ENCODE measurements at regions of chr7 and their contacts with region 1.

Region 1: DNA sequence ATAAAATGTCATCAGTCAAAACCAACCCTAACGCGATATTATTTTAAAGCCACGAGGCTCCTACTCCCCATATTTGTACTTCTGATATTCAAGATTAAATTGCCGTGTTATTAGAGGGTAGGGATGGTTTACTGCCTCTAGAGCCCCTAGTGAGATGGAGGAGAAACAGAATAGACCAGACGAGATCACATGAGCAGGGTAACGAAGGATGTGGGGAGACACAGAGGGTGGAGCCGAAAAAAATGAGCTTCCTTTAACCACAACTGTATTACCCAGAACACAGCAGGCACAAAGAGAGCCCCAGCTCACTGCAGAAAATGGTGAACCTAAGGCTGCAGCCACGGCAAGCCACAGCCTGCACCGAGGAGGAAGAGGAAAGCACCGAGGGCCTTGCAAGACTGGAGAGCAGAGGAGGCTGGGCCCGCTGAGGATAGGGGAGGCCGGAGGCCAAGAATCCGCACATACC is 14.3 kb downstream of the ZC3HAV1 start:
- DNase-seq: peak; percentile 91 to 96 (median 94)
- H3K4me3 ChIP-seq: peak overlapping the region; percentile 34 to 39
- H3K4me3 Mint-ChIP-seq: peak overlapping the region; percentile 78 to 93 (median 88)
- H3K27ac ChIP-seq: peak overlapping the region; percentile 61
- H3K27ac Mint-ChIP-seq: peak overlapping the region; percentile 88 to 97 (median 93)
- H3K4me1 ChIP-seq: peaks cover 90% of the 10 kb centered on the region
- H3K4me1 Mint-ChIP-seq: peaks cover 62 to 94% (median 78%) of the 10 kb centered on the region in 4 donors
- H3K27me3 ChIP-seq: no peaks in the 10 kb centered on the region
- H3K27me3 Mint-ChIP-seq: no peaks in the 10 kb centered on the region

Region 2: GRCh38 chr7:139068544-139069399 is 26.5 kb before region 1 on chr7:
- CTCF ChIA-PET with region 1: interaction called, 6 read pairs
- POLR2A ChIA-PET with region 1: interaction called, 10 read pairs
- intact Hi-C with region 1: no loop called
- DNase-seq: no peak
- H3K4me3 ChIP-seq: no peak overlapping the region
- H3K4me3 Mint-ChIP-seq: peak overlapping the region in 1 of 8 donors; percentile 40
- H3K27ac ChIP-seq: no peak overlapping the region
- H3K27ac Mint-ChIP-seq: peak overlapping the region; percentile 47 to 93 (median 68)
- H3K4me1 ChIP-seq: peaks cover 43% of the 10 kb centered on the region
- H3K4me1 Mint-ChIP-seq: peaks cover 33 to 83% (median 56%) of the 10 kb centered on the region in 4 donors
- H3K27me3 ChIP-seq: no peaks in the 10 kb centered on the region
- H3K27me3 Mint-ChIP-seq: no peaks in the 10 kb centered on the region

Region 3: GRCh38 chr7:139080905-139081304 is 14.3 kb before region 1 on chr7:
- CTCF ChIA-PET with region 1: interaction called, 35 read pairs
- POLR2A ChIA-PET with region 1: interaction called, 244 read pairs
- intact Hi-C with region 1: loop called (anchors 1 kb)
- DNase-seq: no peak
- H3K4me3 ChIP-seq: no peak overlapping the region
- H3K4me3 Mint-ChIP-seq: peak overlapping the region; percentile 5 to 88 (median 68)
- H3K27ac ChIP-seq: peak overlapping the region; percentile 30
- H3K27ac Mint-ChIP-seq: peak overlapping the region; percentile 79 to 94 (median 88)
- H3K4me1 ChIP-seq: peaks cover 83% of the 10 kb centered on the region
- H3K4me1 Mint-ChIP-seq: peaks cover 62 to 97% (median 84%) of the 10 kb centered on the region in 4 donors
- H3K27me3 ChIP-seq: no peaks in the 10 kb centered on the region
- H3K27me3 Mint-ChIP-seq: no peaks in the 10 kb centered on the region

Region 4: GRCh38 chr7:139118234-139118804 is 23.1 kb after region 1 on chr7:
- CTCF ChIA-PET with region 1: interaction called, 17 read pairs
- POLR2A ChIA-PET with region 1: interaction called, 46 read pairs
- intact Hi-C with region 1: no loop called
- DNase-seq: no peak
- H3K4me3 ChIP-seq: peak overlapping the region in 1 of 2 donors; percentile 8
- H3K4me3 Mint-ChIP-seq: peak overlapping the region; percentile 48 to 86 (median 78)
- H3K27ac ChIP-seq: peak overlapping the region; percentile 4
- H3K27ac Mint-ChIP-seq: peak overlapping the region; percentile 59 to 93 (median 89)
- H3K4me1 ChIP-seq: peaks cover 28% of the 10 kb centered on the region
- H3K4me1 Mint-ChIP-seq: peaks cover 25 to 52% (median 32%) of the 10 kb centered on the region in 4 donors
- H3K27me3 ChIP-seq: no peaks in the 10 kb centered on the region
- H3K27me3 Mint-ChIP-seq: peaks cover 0 to 3% of the 10 kb centered on the region in 2 donors

Region 5: DNA sequence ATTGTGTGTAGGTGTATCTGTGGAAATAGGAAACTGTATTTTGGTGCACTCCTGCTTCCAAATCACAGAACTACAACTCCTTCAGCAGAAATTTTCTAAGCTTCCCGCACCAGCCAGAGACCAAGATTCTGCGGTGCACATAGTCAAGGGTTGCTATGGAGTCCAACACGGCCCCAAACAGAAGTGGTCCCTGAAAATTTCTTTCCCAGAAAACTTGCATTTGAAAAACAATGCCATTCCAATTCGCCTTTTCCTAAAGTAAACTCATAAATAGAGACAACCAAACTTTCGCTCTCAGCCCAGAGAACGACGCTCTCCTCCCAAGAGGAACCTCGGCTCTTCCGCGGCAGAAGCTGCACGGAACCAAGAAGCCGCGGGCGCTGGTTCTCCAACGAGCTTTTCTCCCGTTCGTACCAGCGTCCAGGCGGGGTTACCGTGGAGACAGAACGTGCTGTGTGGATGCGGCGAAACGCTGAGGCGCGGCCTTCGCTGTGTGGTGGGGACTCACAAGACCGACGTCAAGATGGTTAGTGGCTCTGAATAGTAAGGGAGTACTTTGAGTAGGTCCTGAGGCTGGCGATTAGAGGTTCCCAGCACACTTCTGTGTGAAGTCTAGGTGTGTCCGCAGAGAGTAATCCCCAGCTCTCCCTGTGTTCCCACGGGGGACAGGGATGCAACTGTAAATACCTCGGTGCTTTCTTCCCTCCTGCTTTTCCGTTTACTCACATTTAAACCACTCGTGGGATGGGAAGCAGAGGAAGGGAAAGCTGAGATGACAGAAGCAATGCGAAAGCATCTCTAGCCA is 38.3 kb after region 1 on chr7:
- CTCF ChIA-PET with region 1: interaction called, 11 read pairs
- POLR2A ChIA-PET with region 1: interaction called, 36 read pairs
- intact Hi-C with region 1: loop called (anchors 1 kb)
- DNase-seq: peak; percentile 86 to 89 (median 88)
- H3K4me3 ChIP-seq: peak overlapping the region; percentile 25 to 55
- H3K4me3 Mint-ChIP-seq: peak overlapping the region; percentile 87 to 97 (median 92)
- H3K27ac ChIP-seq: peak overlapping the region; percentile 56
- H3K27ac Mint-ChIP-seq: peak overlapping the region; percentile 73 to 97 (median 93)
- H3K4me1 ChIP-seq: peaks cover 14% of the 10 kb centered on the region
- H3K4me1 Mint-ChIP-seq: peaks cover 5 to 22% (median 17%) of the 10 kb centered on the region in 4 donors
- H3K27me3 ChIP-seq: no peaks in the 10 kb centered on the region
- H3K27me3 Mint-ChIP-seq: no peaks in the 10 kb centered on the region

Region 6: GRCh38 chr7:139180700-139181311 is 85.6 kb after region 1 on chr7:
- CTCF ChIA-PET with region 1: no interaction called
- POLR2A ChIA-PET with region 1: no interaction called
- intact Hi-C with region 1: no loop called
- DNase-seq: no peak
- H3K4me3 ChIP-seq: no peak overlapping the region
- H3K4me3 Mint-ChIP-seq: no peak overlapping the region
- H3K27ac ChIP-seq: no peak overlapping the region
- H3K27ac Mint-ChIP-seq: no peak overlapping the region
- H3K4me1 ChIP-seq: peaks cover 3% of the 10 kb centered on the region
- H3K4me1 Mint-ChIP-seq: peaks cover 0 to 4% (median under 1%) of the 10 kb centered on the region in 4 donors
- H3K27me3 ChIP-seq: no peaks in the 10 kb centered on the region
- H3K27me3 Mint-ChIP-seq: no peaks in the 10 kb centered on the region

Region 7: GRCh38 chr7:139359366-139360209 is 264.4 kb after region 1 on chr7 and contains the start of gene LUC7L2:
- CTCF ChIA-PET with region 1: no interaction called
- POLR2A ChIA-PET with region 1: interaction called, 14 read pairs
- intact Hi-C with region 1: no loop called
- DNase-seq: peak; percentile 99
- H3K4me3 ChIP-seq: peak within 1 kb of the TSS; percentile 90 to 100
- H3K4me3 Mint-ChIP-seq: peak within 1 kb of the TSS; percentile 96 to 100 (median 99)
- H3K27ac ChIP-seq: peak within 1 kb of the TSS; percentile 98
- H3K27ac Mint-ChIP-seq: peak within 1 kb of the TSS; percentile 98 to 99 (median 99)
- H3K4me1 ChIP-seq: peaks cover 47% of the 10 kb centered on the region
- H3K4me1 Mint-ChIP-seq: peaks cover 20 to 65% (median 38%) of the 10 kb centered on the region in 4 donors
- H3K27me3 ChIP-seq: no peaks in the 10 kb centered on the region
- H3K27me3 Mint-ChIP-seq: no peaks in the 10 kb centered on the region
- total RNA-seq, gene LUC7L2: 131 to 133 TPM

Measured in CD4-positive, alpha-beta memory T cell (primary cell).